ENCODE measurements at regions of chr5 and their contacts with region 1.

Region 1: DNA sequence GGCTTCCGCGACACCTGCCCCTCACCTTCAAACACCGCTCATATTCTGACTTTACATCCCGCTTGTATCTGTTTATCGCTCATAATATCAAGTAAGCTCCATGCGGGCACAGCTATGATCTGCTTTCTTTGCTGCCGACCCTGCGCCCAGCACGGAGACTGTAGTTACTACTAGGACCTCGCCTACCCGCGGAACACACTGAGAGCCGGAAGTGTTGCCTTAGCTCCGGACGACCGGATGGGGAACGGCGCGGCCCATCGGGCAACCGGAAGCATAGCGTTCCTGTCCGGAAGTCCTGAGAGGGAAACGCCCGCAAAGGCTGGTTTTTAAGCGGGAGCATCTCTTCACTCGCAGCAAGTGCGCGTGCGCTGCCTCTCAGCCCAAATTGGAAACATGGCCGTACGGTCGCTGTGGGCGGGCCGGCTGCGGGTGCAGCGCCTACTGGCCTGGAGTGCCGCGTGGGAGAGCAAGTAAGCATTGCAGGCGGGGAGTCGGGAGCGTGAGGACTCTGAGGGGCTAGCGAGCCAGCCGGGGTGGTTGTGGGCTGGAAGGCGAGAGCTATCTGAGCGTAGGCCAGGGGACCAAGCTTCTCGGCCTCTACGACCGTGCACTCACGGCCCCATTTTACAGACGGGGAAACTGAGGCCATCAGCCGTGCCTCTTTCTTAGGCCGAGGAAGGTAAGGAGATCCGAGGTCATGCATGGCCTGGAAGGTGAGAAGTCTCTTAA is at the start of gene GRPEL2:
- DNase-seq: peak; percentile 96
- CTCF ChIP-seq: no peak

Region 2: GRCh38 chr5:149357370-149358293 is 12.3 kb after region 1 on chr5 and contains the start of gene PCYOX1L:
- CTCF ChIA-PET with region 1: interaction called, 20 read pairs
- POLR2A ChIA-PET with region 1: interaction called, 5 read pairs
- DNase-seq: peak; percentile 98
- CTCF ChIP-seq: no peak